ENCODE measurements at regions of chr3 and their contacts with region 1.

Region 1: DNA sequence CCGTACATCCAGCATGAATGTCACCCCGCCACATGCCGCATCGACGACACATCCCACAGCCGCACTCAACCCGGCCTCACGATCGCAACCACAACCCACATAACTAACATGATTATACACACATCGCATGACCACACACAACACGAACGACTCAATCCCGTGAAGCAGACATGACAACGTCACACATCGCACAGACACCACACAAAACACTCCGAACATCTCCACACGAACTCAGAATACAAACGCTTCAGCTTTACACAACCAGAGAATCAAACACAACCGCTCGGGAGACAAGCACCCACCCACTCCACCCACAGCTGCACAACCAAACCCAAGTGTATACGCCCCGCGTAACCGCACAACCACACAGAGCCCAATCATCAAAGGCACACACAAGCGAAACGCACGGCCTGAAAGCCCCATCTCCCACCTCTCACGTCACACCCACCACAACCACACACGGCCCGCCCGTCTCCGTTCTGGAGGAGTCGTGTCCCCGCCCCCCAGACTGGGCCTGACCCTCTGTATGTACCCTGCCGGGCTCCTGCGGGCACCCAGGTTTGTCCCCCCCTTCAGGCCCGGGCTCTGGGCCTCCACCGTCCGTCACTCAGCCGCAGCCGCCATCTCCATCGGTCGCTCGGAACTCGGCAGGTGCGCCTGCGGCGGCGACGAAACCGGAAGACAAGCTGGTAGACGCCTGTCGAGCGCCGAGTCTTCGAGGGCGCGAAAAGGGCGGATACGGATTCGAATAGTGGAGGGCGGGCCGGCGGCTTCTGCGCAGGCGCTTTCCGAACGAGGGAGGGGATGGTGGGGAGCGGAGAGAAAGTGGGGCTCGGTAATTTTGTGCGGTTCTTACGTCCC is at the start of gene RBSN:
- DNase-seq: peak; percentile 92 to 93
- ATAC-seq: peak; percentile 55 to 69
- H3K4me3 ChIP-seq: peak within 1 kb of the TSS; percentile 62 to 99 (median 93)
- H3K27ac ChIP-seq: peak within 1 kb of the TSS; percentile 87 to 96 (median 88)
- H3K4me1 ChIP-seq: peaks cover 36 to 40% of the 10 kb centered on the region in 2 donors
- H3K27me3 ChIP-seq: no peaks in the 10 kb centered on the region
- CTCF ChIP-seq: no peak
- POLR2A ChIP-seq: peak; percentile 86 to 94
- total RNA-seq, gene RBSN: 26.8 to 42.6 (median 28.6) TPM

Region 2: DNA sequence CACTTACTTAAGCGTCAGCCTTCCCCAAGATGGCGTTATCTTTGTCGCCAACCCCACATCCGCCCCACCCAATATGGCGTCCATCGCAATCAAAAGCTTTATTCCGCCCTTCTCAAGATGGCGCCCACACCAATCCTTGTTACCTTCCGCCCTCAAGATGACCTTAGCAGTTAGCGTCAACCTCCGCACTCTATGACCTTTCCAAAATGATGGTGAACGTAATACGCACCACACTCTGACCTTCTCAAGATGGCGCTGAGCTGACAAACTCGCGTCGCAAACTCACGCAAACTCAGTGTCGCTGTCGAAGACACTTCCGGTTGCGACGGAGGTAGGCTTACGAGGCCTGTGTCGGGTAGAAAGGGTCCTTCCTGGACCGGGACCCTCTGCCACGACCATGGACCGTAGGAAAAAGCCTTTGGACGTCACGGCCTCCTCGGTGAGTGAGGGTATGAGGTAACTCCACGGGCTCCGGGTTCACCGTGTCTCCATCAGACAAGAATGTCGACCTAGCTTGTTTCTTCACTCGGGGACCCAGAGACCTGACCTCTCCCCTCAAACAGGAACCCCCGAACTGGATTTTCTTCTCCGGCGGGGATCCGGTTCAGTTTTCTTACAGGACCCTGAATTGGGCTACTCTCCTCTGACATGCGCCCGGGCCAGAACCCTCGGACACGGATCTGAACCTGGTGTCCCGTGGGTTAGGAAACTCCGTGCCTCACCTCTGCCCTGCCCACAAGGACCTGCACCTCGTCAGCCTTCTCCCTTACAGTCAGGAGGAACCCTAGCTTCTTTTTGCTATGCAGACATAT is 447.1 kb before region 1 on chr3 and contains the start of gene CCDC174:
- in situ Hi-C with region 1: loop called in 1 of 4 experiments (anchors 25 kb)
- intact Hi-C with region 1: loop called (anchors 5 kb)
- DNase-seq: peak; percentile 95 to 98
- ATAC-seq: peak; percentile 99 to 100
- H3K4me3 ChIP-seq: peak within 1 kb of the TSS; percentile 67 to 85 (median 78)
- H3K27ac ChIP-seq: peak within 1 kb of the TSS; percentile 89 to 96 (median 90)
- H3K4me1 ChIP-seq: peaks cover 21 to 26% of the 10 kb centered on the region in 2 donors
- H3K27me3 ChIP-seq: no peaks in the 10 kb centered on the region
- CTCF ChIP-seq: no peak
- POLR2A ChIP-seq: peak; percentile 72 to 88
- total RNA-seq, gene CCDC174: 11.1 to 22.2 (median 14.8) TPM

Region 3: DNA sequence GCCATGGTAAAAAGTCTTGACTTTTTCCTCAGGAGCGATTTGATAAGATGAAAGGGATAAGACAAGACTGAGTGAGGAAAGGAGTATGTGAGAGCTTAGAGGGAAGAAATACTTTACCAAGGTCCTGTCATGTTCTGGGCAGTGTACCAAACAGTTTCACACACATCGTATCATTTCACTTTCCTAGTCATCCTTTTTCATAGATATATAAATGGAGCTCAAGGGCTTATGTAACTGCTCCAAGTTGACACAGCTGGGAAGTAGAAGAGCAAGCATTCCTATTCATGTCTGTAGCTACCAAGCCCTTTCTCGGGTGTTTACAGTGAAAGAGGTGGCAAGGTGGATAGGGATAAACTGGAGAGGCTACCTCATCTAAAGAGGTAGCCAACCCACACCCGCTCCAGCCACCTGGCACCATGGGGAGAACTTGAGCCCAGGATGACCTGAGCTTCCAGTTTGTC is 91.0 kb before region 1 on chr3:
- in situ Hi-C with region 1: no loop called
- intact Hi-C with region 1: loop called (anchors 2 kb)
- DNase-seq: peak; percentile 65 to 71
- ATAC-seq: peak; percentile 97 to 98
- H3K4me3 ChIP-seq: no peak overlapping the region
- H3K27ac ChIP-seq: peak overlapping the region; percentile 69 to 84 (median 82)
- H3K4me1 ChIP-seq: peaks cover 17 to 18% of the 10 kb centered on the region in 2 donors
- H3K27me3 ChIP-seq: no peaks in the 10 kb centered on the region
- CTCF ChIP-seq: no peak
- POLR2A ChIP-seq: no peak

Region 4: DNA sequence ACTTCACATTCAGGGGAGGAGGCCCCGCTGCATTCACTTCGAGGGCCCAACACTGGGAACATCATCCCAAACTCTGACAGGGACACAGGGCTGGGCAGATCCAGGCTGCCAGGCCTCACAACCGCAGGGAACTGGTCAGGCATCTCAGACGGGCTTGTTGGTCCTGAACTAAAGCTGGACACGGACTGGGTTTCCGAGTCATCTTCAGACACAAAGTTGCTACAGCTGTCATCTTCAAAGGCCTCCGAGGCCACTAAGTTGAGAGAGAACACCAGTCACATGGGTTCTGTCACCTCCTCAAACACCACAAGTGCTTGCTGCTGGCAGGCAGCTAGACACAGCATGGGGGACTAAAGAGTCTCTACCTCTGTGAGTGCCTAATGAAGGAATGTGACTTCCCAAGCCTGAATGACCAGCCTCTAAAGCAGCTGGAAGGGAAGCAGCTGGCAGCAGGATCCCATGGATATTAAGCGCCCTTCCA is 158.2 kb after region 1 on chr3:
- in situ Hi-C with region 1: no loop called
- intact Hi-C with region 1: no loop called
- DNase-seq: peak in 1 of 2 donors; percentile 37
- ATAC-seq: peak; percentile 37 to 70
- H3K4me3 ChIP-seq: no peak overlapping the region
- H3K27ac ChIP-seq: peak overlapping the region; percentile 45 to 73 (median 60)
- H3K4me1 ChIP-seq: peaks cover 5 to 7% of the 10 kb centered on the region in 2 donors
- H3K27me3 ChIP-seq: no peaks in the 10 kb centered on the region
- CTCF ChIP-seq: no peak
- POLR2A ChIP-seq: no peak

Region 5: DNA sequence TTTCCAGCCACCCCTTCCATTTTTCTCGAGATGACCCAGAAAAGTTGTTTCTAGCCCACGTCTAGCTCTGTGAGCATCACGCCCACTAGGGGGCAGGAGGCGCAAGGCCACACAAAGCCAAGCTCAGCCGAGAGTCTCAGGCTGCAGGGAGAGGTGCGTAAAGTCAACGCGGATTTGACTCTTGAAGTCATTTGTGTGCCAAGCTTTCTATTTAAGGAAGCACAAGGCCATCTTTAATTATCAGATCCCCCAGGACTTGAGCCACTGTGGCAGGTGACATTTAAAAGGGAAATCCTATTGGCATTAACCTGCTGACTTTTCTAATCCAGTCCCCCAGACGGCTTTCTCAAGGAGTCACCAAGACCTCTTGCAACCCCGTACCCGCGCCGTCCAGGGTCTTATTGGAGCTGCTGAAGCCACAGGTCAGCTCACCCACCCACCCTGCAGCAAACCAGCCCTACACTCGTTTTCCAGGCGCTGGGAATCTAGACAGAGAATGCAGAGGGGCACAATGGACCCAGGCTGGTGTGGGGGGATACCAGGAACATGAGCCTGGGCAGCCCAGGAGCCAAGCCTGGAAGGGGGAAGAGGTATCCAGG is 169.4 kb after region 1 on chr3:
- in situ Hi-C with region 1: no loop called
- intact Hi-C with region 1: loop called (anchors 5 kb)
- DNase-seq: peak; percentile 74 to 85
- ATAC-seq: peak; percentile 75 to 82
- H3K4me3 ChIP-seq: peak overlapping the region in 1 of 4 donors; percentile 1
- H3K27ac ChIP-seq: peak overlapping the region; percentile 73 to 81 (median 74)
- H3K4me1 ChIP-seq: peaks cover 46 to 57% of the 10 kb centered on the region in 2 donors
- H3K27me3 ChIP-seq: no peaks in the 10 kb centered on the region
- CTCF ChIP-seq: peak; percentile 94 to 97 (median 96)
- POLR2A ChIP-seq: no peak

Region 6: GRCh38 chr3:15319575-15319974 is 220.8 kb after region 1 on chr3:
- in situ Hi-C with region 1: no loop called
- intact Hi-C with region 1: no loop called
- DNase-seq: peak; percentile 62 to 92
- ATAC-seq: peak; percentile 57 to 78
- H3K4me3 ChIP-seq: peak overlapping the region in 1 of 4 donors; percentile 1
- H3K27ac ChIP-seq: peak overlapping the region; percentile 88 to 93 (median 91)
- H3K4me1 ChIP-seq: peaks cover 90 to 91% of the 10 kb centered on the region in 2 donors
- H3K27me3 ChIP-seq: no peaks in the 10 kb centered on the region
- CTCF ChIP-seq: no peak
- POLR2A ChIP-seq: peak in 1 of 2 donors; percentile 52

Region 7: GRCh38 chr3:15377961-15378791 is 279.4 kb after region 1 on chr3:
- in situ Hi-C with region 1: no loop called
- intact Hi-C with region 1: loop called (anchors 2 kb)
- DNase-seq: peak; percentile 92 to 95
- ATAC-seq: peak; percentile 98 to 99
- H3K4me3 ChIP-seq: peak overlapping the region in 3 of 4 donors; percentile 24 to 37 (median 27)
- H3K27ac ChIP-seq: peak overlapping the region; percentile 57 to 74 (median 66)
- H3K4me1 ChIP-seq: peaks cover 0 to 4% of the 10 kb centered on the region in 2 donors
- H3K27me3 ChIP-seq: no peaks in the 10 kb centered on the region
- CTCF ChIP-seq: peak; percentile 88 to 94 (median 91)
- POLR2A ChIP-seq: no peak